Heart left ventricle (tissue), 16 donors: ENCODE measurements at regions of chr1 and their contacts with region 1.

Region 1: GRCh38 chr1:203504397-203505250 is 10.7 kb downstream of the OPTC start:
- DNase-seq: peak; percentile 79 to 89 (median 82)
- ATAC-seq: peak; percentile 25 to 57 (median 48)
- H3K4me3 ChIP-seq: no peak overlapping the region
- H3K27ac ChIP-seq: peak overlapping the region in 2 of 12 donors; percentile 2 to 90
- H3K4me1 ChIP-seq: peaks cover 3 to 43% (median 38%) of the 10 kb centered on the region in 12 donors
- H3K27me3 ChIP-seq: no peaks in the 10 kb centered on the region
- CTCF ChIP-seq: peak; percentile 81 to 90 (median 86)
- POLR2A ChIP-seq: no peak

Region 2: GRCh38 chr1:203597331-203598090 is 92.9 kb after region 1 on chr1:
- intact Hi-C with region 1: loop called in 2 of 10 experiments (anchors 5 kb)
- DNase-seq: peak in 4 of 5 donors; percentile 52 to 88 (median 74)
- ATAC-seq: peak; percentile 79 to 92 (median 84)
- H3K4me3 ChIP-seq: peak overlapping the region in 2 of 12 donors; percentile 12 to 19
- H3K27ac ChIP-seq: peak overlapping the region; percentile 11 to 89 (median 72)
- H3K4me1 ChIP-seq: peaks cover 0 to 47% (median 27%) of the 10 kb centered on the region in 12 donors
- H3K27me3 ChIP-seq: no peaks in the 10 kb centered on the region
- CTCF ChIP-seq: no peak
- POLR2A ChIP-seq: no peak

Region 3: GRCh38 chr1:203625628-203626019 is 121.0 kb after region 1 on chr1:
- intact Hi-C with region 1: loop called (anchors 1 to 5 kb)
- DNase-seq: peak in 1 of 5 donors; percentile 33
- ATAC-seq: peak; percentile 19 to 52 (median 32)
- H3K4me3 ChIP-seq: peak overlapping the region in 5 of 12 donors; percentile 0 to 83 (median 77)
- H3K27ac ChIP-seq: peak overlapping the region in 9 of 12 donors; percentile 87 to 97 (median 93)
- H3K4me1 ChIP-seq: peaks cover 0 to 49% (median 21%) of the 10 kb centered on the region in 12 donors
- H3K27me3 ChIP-seq: no peaks in the 10 kb centered on the region
- CTCF ChIP-seq: peak in 11 of 12 donors; percentile 28 to 70 (median 55)
- POLR2A ChIP-seq: no peak

Region 4: GRCh38 chr1:203769505-203770343 is 265.1 kb after region 1 on chr1:
- intact Hi-C with region 1: loop called in 2 of 10 experiments (anchors 10 kb)
- DNase-seq: peak; percentile 63 to 85 (median 72)
- ATAC-seq: peak; percentile 81 to 95 (median 93)
- H3K4me3 ChIP-seq: peak overlapping the region in 7 of 12 donors; percentile 3 to 40 (median 18)
- H3K27ac ChIP-seq: peak overlapping the region in 8 of 12 donors; percentile 9 to 73 (median 42)
- H3K4me1 ChIP-seq: peaks cover 0 to 20% (median 4%) of the 10 kb centered on the region in 12 donors
- H3K27me3 ChIP-seq: no peaks in the 10 kb centered on the region
- CTCF ChIP-seq: no peak
- POLR2A ChIP-seq: no peak